ENCODE measurements at regions of chr1 and their contacts with region 1.

Region 1: DNA sequence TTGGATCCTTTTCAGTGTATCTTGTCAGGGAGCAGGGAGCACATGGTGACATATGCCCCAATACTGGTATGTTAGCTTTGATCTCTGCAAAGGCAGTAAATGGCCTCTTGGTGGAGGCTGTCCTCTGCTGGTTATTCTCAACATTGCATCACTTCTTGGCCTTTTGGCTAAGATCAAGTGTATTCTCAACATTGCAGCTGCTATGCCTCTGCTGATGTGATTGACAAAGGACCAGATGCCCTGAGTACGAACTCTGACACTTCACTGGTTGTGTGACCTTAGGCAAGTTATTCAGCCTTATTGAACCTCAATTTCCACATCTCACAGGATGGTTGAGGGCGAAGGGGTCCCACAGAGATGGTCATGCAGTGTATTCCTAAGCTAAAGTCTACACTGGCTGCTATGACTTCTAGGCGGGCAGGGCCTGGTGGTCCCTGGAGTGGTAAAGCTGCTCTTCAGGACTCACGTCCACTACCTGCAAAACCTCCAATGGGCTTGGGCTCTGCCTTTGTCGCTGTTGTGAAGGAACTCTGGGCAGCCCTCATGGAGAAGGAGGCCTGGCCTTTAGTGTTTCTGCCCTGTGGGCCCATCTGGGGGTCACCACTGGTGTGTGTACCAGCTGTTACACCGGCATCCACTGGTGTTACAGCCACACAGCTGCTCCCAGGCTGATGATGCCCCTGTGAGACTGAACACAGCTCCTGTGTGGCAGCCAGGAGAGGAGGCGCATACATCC is 64.8 kb downstream of the DNTTIP2 start:
- DNase-seq: no peak
- ATAC-seq: peak; percentile 84 to 97 (median 90)
- H3K4me3 ChIP-seq: no peak overlapping the region
- H3K27ac ChIP-seq: no peak overlapping the region
- H3K4me1 ChIP-seq: no peaks in the 10 kb centered on the region
- H3K27me3 ChIP-seq: no peaks in the 10 kb centered on the region
- CTCF ChIP-seq: peak; percentile 98

Region 2: GRCh38 chr1:93680757-93681550 is 133.3 kb before region 1 on chr1:
- intact Hi-C with region 1: loop called in 1 of 2 experiments (anchors 5 kb)
- DNase-seq: peak; percentile 78 to 83
- ATAC-seq: peak; percentile 83 to 92 (median 90)
- H3K4me3 ChIP-seq: peak overlapping the region; percentile 82
- H3K27ac ChIP-seq: peak overlapping the region; percentile 69
- H3K4me1 ChIP-seq: peaks cover 9% of the 10 kb centered on the region
- H3K27me3 ChIP-seq: no peaks in the 10 kb centered on the region
- CTCF ChIP-seq: peak; percentile 57